ENCODE measurements at regions of chr4 and their contacts with region 1.

Region 1: DNA sequence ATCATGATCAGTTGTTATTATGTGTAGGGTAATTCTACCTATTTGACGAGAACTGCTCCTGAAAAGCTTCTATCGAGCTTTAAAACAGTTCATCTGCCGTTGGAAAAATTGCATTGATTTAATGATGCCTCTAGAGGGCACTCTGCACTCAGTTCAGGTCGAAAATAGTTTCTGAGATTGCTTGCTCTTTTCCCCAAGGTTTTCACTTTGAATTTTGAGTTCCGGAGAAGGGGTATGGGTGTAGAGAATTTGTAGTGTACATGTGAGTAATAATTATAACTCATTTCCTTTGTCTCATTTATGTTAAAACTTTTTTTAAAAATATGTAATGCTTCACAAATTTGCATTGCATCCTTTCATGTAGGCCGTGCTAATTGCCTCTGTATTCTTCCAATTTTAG is 28.4 kb upstream of the TNIP3 start:
- DNase-seq: no peak
- H3K4me3 Mint-ChIP-seq: no peak overlapping the region
- H3K27ac Mint-ChIP-seq: no peak overlapping the region
- H3K4me1 Mint-ChIP-seq: no peaks in the 10 kb centered on the region
- H3K27me3 Mint-ChIP-seq: no peaks in the 10 kb centered on the region
- CTCF ChIP-seq: no peak

Region 2: DNA sequence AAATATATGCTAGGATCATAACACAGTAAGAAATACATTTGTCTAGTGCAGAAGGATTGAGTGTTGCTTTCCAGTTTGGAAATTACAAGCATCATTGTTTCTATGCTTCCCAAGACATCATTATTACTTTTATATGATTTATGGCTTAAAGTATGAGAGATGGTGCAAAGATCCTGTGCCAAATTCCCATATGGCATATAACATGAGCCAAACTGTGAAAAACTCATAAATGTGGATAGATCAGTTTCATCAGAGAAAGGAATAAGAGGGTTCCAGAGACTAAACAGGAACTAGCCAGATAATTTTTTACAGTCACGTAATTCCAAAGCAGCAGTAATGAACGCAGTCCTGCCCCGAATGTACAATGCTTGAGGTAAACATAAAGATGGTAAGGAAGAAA is 396.2 kb before region 1 on chr4:
- CTCF ChIA-PET with region 1: no interaction called
- intact Hi-C with region 1: no loop called
- DNase-seq: no peak
- H3K4me3 Mint-ChIP-seq: no peak overlapping the region
- H3K27ac Mint-ChIP-seq: no peak overlapping the region
- H3K4me1 Mint-ChIP-seq: no peaks in the 10 kb centered on the region
- H3K27me3 Mint-ChIP-seq: no peaks in the 10 kb centered on the region
- CTCF ChIP-seq: no peak

Region 3: GRCh38 chr4:120977435-120977997 is 215.0 kb before region 1 on chr4:
- CTCF ChIA-PET with region 1: no interaction called
- intact Hi-C with region 1: no loop called
- DNase-seq: peak; percentile 10
- H3K4me3 Mint-ChIP-seq: no peak overlapping the region
- H3K27ac Mint-ChIP-seq: no peak overlapping the region
- H3K4me1 Mint-ChIP-seq: peaks cover 9% of the 10 kb centered on the region
- H3K27me3 Mint-ChIP-seq: no peaks in the 10 kb centered on the region
- CTCF ChIP-seq: no peak

Region 4: GRCh38 chr4:121252224-121252806 is 59.8 kb after region 1 on chr4:
- CTCF ChIA-PET with region 1: interaction called, 6 read pairs
- intact Hi-C with region 1: loop called (anchors 1 kb)
- DNase-seq: peak; percentile 58
- H3K4me3 Mint-ChIP-seq: no peak overlapping the region
- H3K27ac Mint-ChIP-seq: no peak overlapping the region
- H3K4me1 Mint-ChIP-seq: no peaks in the 10 kb centered on the region
- H3K27me3 Mint-ChIP-seq: no peaks in the 10 kb centered on the region
- CTCF ChIP-seq: peak; percentile 20

Region 5: GRCh38 chr4:121656269-121656641 is 463.8 kb after region 1 on chr4:
- CTCF ChIA-PET with region 1: no interaction called
- intact Hi-C with region 1: loop called (anchors 10 kb)
- DNase-seq: peak; percentile 32
- H3K4me3 Mint-ChIP-seq: no peak overlapping the region
- H3K27ac Mint-ChIP-seq: peak overlapping the region; percentile 3
- H3K4me1 Mint-ChIP-seq: no peaks in the 10 kb centered on the region
- H3K27me3 Mint-ChIP-seq: no peaks in the 10 kb centered on the region
- CTCF ChIP-seq: no peak